Activated CD8-positive, alpha-beta T cell treated with anti-CD3 and anti-CD28 coated beads for 36 hours (primary cell): ENCODE measurements at regions of chr2 and their contacts with region 1.

Region 1: DNA sequence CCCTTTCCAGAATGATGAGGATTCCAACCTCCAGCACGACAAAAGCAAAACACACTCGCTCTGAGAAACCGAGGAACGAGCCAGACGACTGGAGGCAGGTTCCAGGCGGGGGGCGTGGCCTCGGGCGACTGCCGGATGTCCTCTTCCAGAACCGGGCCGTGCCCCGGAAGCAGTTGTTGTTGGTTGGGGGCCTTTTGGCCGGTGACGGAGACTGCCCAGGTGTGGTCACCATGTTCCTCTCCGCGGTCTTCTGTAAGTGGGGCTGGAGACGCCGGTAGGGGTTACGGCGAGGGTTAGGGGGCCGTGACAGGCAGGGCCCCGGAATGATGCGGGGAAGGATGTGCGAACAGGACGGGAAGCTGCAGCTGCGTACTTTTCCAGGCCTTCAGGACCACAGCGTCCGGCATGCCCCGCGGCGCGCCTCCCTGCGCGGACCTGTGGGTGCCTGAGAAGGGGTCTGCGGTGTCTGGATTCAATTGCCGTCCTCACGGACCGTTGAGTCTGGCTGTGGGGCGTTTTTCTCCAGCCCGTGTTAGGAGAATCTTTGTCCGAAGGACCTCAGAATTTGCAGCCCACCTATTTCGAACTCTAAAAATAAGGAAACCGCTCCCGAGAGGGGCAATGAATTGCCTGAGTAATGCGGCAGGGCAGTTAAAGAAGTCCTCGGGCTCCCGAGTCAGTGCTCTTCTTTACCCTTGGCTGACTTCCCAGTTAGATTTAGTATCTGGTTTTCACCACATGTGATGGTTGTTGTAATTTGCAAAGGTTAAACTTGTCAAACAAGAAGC is at the start of gene MRPL33:
- DNase-seq: peak; percentile 96
- ATAC-seq: peak; percentile 98
- H3K4me3 Mint-ChIP-seq: peak within 1 kb of the TSS; percentile 95
- H3K27ac Mint-ChIP-seq: peak within 1 kb of the TSS; percentile 98
- H3K4me1 Mint-ChIP-seq: peaks cover 36% of the 10 kb centered on the region
- H3K27me3 Mint-ChIP-seq: no peaks in the 10 kb centered on the region
- CTCF ChIP-seq: no peak
- total RNA-seq, gene MRPL33: 54.6 to 59.2 TPM

Region 2: DNA sequence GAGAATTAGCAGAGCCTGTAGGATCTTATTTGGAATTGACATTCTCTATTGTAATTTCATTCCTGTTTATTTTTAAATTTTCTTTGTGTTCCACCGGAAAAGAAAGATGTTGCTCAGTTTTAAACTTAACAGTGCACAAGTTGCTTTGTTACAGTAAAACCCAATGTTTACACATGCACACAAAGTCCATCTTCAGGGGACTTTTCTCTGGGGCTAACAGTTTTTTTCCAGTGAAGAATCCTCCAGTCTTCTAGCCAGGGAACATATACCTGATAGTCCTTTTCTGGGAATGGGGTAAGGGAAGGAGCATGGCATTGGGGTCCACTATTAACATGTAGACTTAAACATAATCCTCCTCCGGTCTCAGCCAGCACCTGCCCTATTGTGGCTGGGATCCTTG is 25.4 kb before region 1 on chr2:
- CTCF ChIA-PET with region 1: no interaction called
- POLR2A ChIA-PET with region 1: no interaction called
- intact Hi-C with region 1: no loop called
- DNase-seq: no peak
- ATAC-seq: no peak
- H3K4me3 Mint-ChIP-seq: no peak overlapping the region
- H3K27ac Mint-ChIP-seq: no peak overlapping the region
- H3K4me1 Mint-ChIP-seq: no peaks in the 10 kb centered on the region
- H3K27me3 Mint-ChIP-seq: peaks cover 1% of the 10 kb centered on the region
- CTCF ChIP-seq: no peak

Region 3: DNA sequence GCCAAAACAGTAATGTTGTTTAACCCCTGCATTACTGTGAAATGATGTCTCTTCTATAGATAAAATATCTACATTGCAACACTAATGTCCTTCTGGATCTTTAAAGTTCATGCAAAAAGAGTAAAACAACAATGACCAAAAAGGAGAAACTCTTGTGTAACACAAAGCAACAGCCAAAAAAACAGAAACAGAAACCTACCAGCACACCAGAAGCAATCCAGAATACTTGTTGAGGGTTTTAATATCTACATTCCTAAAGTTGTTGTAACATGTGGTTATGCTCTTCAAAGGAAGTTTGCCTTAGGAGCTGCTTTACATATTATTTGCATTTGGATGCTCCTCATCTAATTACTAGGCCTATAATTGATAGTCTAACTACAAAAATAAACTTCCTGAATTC is 275.9 kb after region 1 on chr2:
- CTCF ChIA-PET with region 1: no interaction called
- POLR2A ChIA-PET with region 1: no interaction called
- intact Hi-C with region 1: loop called (anchors 5 kb)
- DNase-seq: no peak
- ATAC-seq: no peak
- H3K4me3 Mint-ChIP-seq: no peak overlapping the region
- H3K27ac Mint-ChIP-seq: no peak overlapping the region
- H3K4me1 Mint-ChIP-seq: peaks cover 10% of the 10 kb centered on the region
- H3K27me3 Mint-ChIP-seq: no peaks in the 10 kb centered on the region
- CTCF ChIP-seq: no peak